Testis (tissue), 5 donors: ENCODE measurements at regions of chr18 and their contacts with region 1.

Region 1: DNA sequence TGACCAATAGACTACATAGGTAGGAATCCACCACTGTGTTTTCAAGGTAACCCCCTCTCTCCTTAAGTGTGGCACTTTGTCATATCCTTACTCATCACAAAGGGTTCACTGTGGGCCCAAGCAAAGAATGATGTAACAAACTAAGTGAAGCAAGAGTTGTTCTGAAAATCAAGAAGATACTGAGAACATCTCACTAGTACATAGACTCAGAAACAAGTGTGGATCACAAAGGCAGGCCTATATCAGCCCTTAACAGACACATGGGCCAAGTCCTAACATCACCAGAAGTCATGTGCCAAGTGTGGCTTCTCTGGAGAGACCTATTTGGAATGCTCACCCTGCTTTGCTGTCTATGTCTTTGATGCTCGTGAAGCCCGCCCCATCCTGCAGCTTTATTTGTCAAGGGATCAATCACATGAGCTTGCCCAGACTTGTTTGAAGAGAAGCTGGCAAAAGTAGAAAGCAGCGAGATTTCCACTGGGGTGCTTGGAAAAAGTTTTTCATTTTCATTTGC is 131.2 kb upstream of the TTC39C start:
- DNase-seq: peak; percentile 29
- H3K4me3 ChIP-seq: no peak overlapping the region
- H3K27ac ChIP-seq: peak overlapping the region; percentile 85 to 93
- H3K4me1 ChIP-seq: peaks cover 44% of the 10 kb centered on the region
- H3K27me3 ChIP-seq: no peaks in the 10 kb centered on the region
- CTCF ChIP-seq: no peak
- POLR2A ChIP-seq: no peak

Region 2: DNA sequence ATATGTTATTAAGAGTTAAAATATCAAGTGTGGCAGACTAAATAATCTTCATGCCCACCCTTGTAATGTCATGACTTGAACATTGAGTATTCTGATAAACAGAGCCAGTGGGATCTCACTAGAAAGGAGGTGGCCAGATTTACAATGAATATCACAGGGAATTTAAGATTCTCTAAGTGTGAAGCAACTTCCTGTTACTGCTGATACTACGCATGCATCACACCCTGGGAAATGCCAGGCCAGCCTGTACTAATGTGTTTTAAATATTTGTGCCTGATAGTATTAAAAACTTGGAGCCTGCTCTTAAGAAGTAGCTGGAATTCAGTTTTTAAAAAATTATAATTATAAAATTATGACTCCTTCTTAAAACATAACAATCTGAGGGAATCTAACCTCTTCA is 45.7 kb before region 1 on chr18:
- intact Hi-C with region 1: loop called (anchors 10 kb)
- DNase-seq: no peak
- H3K4me3 ChIP-seq: no peak overlapping the region
- H3K27ac ChIP-seq: peak overlapping the region in 1 of 2 donors; percentile 1
- H3K4me1 ChIP-seq: no peaks in the 10 kb centered on the region
- H3K27me3 ChIP-seq: no peaks in the 10 kb centered on the region
- CTCF ChIP-seq: no peak
- POLR2A ChIP-seq: no peak